OCI-LY7 (cell line): ENCODE measurements at regions of chr12 and their contacts with region 1.

Region 1: DNA sequence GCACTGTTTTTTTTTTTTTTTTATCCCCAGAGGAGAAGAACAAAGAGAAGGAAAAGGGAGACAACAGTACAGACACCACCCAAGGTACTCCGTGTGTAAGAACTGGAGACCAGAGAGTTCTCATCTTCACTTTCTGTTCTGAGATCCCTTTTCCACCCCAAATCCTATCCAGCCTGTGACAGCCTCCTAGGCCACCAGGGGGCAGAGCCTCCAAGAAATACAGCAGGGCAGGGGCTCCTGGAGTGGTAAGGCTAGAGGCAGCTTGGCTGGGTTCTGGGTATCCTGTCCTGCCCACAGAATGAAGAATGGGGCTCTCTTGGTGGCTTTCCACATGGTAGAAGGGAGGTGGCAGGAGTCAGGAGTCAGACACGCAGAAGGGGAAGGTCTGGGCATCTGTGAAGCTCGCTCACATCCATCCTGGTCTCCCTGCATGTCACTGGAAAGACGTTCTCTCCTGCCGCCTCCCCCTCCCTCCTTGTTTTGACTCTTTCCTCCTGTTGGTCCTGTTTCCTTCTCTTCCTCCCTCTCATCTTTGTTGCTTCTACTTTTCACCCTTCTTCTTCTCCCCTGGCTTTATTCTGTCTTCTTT is 12.0 kb downstream of the CLSTN3 start:
- DNase-seq: peak; percentile 70
- H3K4me3 ChIP-seq: no peak overlapping the region
- H3K27ac ChIP-seq: no peak overlapping the region
- H3K4me1 ChIP-seq: no peaks in the 10 kb centered on the region
- CTCF ChIP-seq: peak; percentile 86

Region 2: GRCh38 chr12:6592087-6592486 is 550.1 kb before region 1 on chr12:
- CTCF ChIA-PET with region 1: interaction called, 18 read pairs
- POLR2A ChIA-PET with region 1: no interaction called
- intact Hi-C with region 1: no loop called
- DNase-seq: no peak
- H3K4me3 ChIP-seq: no peak overlapping the region
- H3K27ac ChIP-seq: no peak overlapping the region
- H3K4me1 ChIP-seq: no peaks in the 10 kb centered on the region
- CTCF ChIP-seq: no peak

Region 3: GRCh38 chr12:6998708-6999451 is 143.3 kb before region 1 on chr12:
- CTCF ChIA-PET with region 1: no interaction called
- POLR2A ChIA-PET with region 1: no interaction called
- intact Hi-C with region 1: no loop called
- DNase-seq: no peak
- H3K4me3 ChIP-seq: no peak overlapping the region
- H3K27ac ChIP-seq: no peak overlapping the region
- H3K4me1 ChIP-seq: no peaks in the 10 kb centered on the region
- CTCF ChIP-seq: no peak

Region 4: DNA sequence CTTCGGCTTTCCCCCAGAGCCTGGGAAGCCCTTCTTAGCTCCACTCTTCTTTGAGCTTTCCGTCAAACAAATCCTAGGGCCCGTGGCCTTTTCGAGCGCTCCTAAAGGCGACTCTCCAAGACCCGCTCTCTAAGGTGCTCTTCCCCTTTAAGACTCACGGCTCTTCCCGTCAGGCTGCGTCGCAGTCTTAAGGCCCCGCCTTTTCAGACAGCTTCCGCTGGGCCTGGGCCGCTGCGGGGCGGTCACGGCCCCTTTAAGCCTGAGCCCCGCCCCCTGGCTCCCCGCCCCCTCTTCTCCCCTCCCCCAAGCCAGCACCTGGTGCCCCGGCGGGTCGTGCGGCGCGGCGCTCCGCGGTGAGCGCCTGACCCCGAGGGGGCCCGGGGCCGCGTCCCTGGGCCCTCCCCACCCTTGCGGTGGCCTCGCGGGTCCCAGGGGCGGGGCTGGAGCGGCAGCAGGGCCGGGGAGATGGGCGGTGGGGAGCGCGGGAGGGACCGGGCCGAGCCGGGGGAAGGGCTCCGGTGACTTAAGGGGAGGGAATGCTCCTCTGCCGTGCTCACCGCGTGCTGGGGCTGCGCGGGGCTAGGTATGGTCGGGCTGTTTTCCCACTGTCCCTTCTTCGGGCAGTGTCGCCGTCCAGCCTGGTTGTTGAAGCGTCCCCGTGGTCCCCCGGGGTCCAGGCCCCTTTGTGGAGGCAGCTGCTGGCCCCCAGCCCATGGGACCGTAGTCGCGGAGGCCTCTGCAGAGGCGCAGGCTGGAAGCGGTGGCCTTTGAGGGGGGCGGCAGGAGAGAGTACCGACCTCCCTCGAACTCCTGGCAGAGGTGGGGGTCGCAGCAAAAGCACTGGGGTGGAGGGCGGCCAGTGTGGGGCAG is 47.5 kb after region 1 on chr12 and contains the start of gene PEX5:
- CTCF ChIA-PET with region 1: interaction called, 4 read pairs
- POLR2A ChIA-PET with region 1: interaction called, 3 read pairs
- intact Hi-C with region 1: loop called (anchors 1 kb)
- DNase-seq: peak; percentile 98
- H3K4me3 ChIP-seq: peak within 1 kb of the TSS; percentile 85
- H3K27ac ChIP-seq: peak within 1 kb of the TSS; percentile 72
- H3K4me1 ChIP-seq: peaks cover 26% of the 10 kb centered on the region
- CTCF ChIP-seq: no peak
- total RNA-seq, gene PEX5: 45.6 and 54.4 TPM in 2 replicates

Region 5: DNA sequence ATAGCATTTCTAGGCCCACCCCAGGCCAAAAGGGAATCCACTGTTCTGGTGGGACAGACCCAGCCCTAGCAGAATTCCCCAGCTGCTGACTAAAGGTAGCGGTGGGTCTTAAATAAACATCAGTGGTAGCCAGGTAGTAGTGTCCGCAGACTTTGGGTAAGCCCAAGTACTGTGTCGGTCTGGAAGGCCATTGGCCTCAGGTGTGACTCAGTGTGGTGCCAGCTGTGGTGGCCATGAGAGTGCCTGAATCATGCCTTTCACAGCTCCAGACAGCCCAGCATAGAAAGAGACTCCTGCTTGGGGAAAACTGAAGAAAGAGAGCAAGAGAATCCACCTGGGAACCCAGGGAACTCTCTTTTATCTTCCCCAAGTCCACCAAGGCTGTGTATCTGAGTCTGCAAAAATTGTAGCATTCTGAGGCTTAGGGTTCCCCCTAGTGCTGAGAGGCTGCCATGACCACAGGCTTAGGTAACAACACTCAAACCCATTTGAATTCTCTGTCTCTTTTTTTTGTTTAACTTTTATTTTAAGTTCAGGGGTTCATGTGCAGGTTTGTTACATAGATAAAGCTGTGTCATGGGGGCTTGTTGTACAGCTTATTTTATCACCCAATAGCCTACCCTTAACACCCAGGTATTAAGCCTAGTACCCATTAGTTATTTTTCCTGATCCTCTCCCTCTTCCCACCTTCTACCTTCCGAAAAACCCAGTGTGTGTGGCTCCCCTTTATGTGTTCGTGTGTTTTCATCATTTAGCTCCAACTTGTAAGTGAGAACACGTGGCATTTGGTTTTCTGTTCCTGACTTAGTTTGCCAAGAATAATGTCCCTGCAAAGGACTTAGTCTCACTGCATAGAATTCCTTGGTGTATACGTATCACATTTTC is 318.5 kb after region 1 on chr12:
- CTCF ChIA-PET with region 1: no interaction called
- POLR2A ChIA-PET with region 1: no interaction called
- intact Hi-C with region 1: loop called (anchors 5 kb)
- DNase-seq: peak; percentile 54
- H3K4me3 ChIP-seq: no peak overlapping the region
- H3K27ac ChIP-seq: no peak overlapping the region
- H3K4me1 ChIP-seq: no peaks in the 10 kb centered on the region
- CTCF ChIP-seq: peak; percentile 85

Region 6: GRCh38 chr12:7678738-7679137 is 536.6 kb after region 1 on chr12:
- CTCF ChIA-PET with region 1: no interaction called
- POLR2A ChIA-PET with region 1: no interaction called
- intact Hi-C with region 1: no loop called
- DNase-seq: no peak
- H3K4me3 ChIP-seq: no peak overlapping the region
- H3K27ac ChIP-seq: no peak overlapping the region
- H3K4me1 ChIP-seq: peaks cover 8% of the 10 kb centered on the region
- CTCF ChIP-seq: no peak